ENCODE measurements at regions of chr5 and their contacts with region 1.

Region 1: GRCh38 chr5:172891726-172892421 is 57.8 kb downstream of the ERGIC1 start:
- DNase-seq: peak; percentile 84 to 87
- ATAC-seq: peak; percentile 74 to 85 (median 80)
- H3K4me3 ChIP-seq: no peak overlapping the region
- H3K27ac ChIP-seq: peak overlapping the region; percentile 49 to 94 (median 88)
- H3K4me1 ChIP-seq: peaks cover 15 to 61% (median 48%) of the 10 kb centered on the region in 9 donors
- H3K27me3 ChIP-seq: no peaks in the 10 kb centered on the region
- CTCF ChIP-seq: no peak

Region 2: DNA sequence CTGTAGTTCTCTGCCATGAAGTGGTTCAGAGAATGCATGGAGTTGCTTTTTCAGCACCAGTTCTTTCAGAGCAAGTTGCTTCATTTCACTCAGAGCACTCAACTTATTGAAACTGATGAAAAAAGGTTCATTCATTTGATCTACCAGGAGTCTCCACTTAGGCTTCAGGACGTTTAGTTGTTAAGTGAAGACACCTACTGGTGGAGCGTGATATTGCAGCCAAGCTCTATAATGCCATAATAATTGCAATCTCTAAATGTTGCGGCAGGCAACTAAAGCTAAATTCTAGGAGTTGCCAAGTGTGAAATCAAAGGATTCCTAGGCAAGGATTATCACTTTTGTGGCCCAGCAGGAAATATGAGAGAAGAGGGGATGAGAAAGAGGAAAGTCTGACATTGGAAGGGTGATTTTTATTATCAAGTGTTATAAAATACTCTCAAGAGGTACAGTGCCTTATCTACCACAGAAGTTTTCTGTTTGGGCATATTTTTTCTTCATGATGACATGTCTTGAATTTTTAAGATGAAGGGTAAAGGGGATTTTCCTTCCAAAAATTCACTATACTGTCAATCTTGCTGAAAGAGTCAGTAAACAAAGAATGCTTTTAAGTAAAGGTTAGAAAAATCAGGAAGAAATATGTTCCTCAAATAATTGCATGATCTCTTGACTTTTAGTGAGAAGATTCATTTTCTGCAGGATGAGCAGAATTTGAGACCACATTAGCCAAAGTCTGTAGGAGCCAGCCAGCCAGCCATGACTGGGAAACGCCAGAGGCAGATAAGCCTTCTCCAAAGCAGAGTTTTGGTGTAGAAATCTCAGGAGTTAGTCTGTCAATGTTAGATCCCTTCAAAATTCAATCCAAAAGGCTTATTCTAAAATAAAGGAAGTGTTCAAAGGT is 521.0 kb before region 1 on chr5:
- intact Hi-C with region 1: no loop called
- DNase-seq: no peak
- ATAC-seq: no peak
- H3K4me3 ChIP-seq: no peak overlapping the region
- H3K27ac ChIP-seq: no peak overlapping the region
- H3K4me1 ChIP-seq: no peaks in the 10 kb centered on the region
- H3K27me3 ChIP-seq: no peaks in the 10 kb centered on the region
- CTCF ChIP-seq: peak; percentile 31 to 72 (median 43)

Region 3: GRCh38 chr5:172860520-172861443 is 31.1 kb before region 1 on chr5:
- intact Hi-C with region 1: loop called in 2 of 10 experiments (anchors 2 to 5 kb)
- DNase-seq: peak; percentile 88 to 92
- ATAC-seq: peak; percentile 86 to 94 (median 90)
- H3K4me3 ChIP-seq: peak overlapping the region in 7 of 10 donors; percentile 1 to 39 (median 20)
- H3K27ac ChIP-seq: peak overlapping the region; percentile 86 to 97 (median 92)
- H3K4me1 ChIP-seq: peaks cover 41 to 82% (median 65%) of the 10 kb centered on the region in 9 donors
- H3K27me3 ChIP-seq: no peaks in the 10 kb centered on the region
- CTCF ChIP-seq: no peak

Region 4: GRCh38 chr5:172868924-172869591 is 22.8 kb before region 1 on chr5:
- intact Hi-C with region 1: loop called in 2 of 10 experiments (anchors 2 to 5 kb)
- DNase-seq: peak; percentile 80 to 81
- ATAC-seq: peak; percentile 46 to 81 (median 70)
- H3K4me3 ChIP-seq: no peak overlapping the region
- H3K27ac ChIP-seq: peak overlapping the region; percentile 82 to 97 (median 92)
- H3K4me1 ChIP-seq: peaks cover 60 to 98% (median 89%) of the 10 kb centered on the region in 9 donors
- H3K27me3 ChIP-seq: no peaks in the 10 kb centered on the region
- CTCF ChIP-seq: peak in 5 of 9 donors; percentile 19 to 48 (median 37)